ENCODE measurements at regions of chr1 and their contacts with region 1.

Region 1: GRCh38 chr1:109282952-109283747 is at the start of gene PSRC1:
- DNase-seq: peak; percentile 99
- total RNA-seq, gene PSRC1: 0.59 TPM

Region 2: GRCh38 chr1:109298666-109299557 is 15.8 kb after region 1 on chr1:
- intact Hi-C with region 1: loop called (anchors 2 kb)
- DNase-seq: peak; percentile 81

Measured in cardiac septum (tissue), 1 donor.